ENCODE measurements at regions of chr9 and their contacts with region 1.

Region 1: DNA sequence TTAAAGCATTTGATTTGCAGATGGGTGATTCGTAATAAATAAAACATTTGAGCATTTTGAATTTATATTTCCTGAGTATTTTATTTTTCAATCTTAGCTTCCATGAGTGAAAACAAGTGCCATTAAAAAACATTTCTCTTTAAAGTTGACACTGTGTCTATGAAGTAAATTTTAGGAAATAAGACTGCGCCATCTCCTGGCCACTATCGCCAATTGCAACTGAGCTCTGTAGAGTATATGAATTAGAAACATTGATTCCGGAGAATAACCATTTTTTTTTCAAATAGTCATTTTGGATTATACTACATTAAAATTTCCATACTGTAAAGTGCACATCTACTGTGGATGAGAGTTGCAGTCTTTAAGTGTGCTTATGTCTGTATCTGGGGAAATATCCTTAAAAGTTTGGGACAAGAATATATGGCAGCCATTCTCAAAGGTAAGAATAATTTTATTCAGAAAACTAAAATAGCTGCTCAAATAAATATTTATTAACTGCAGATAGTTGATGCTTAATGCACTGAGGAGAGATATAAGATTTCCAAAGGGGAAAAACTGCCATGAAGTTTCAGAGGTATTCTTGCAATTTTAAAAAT is 5.9 kb downstream of the DMRTA1 start:
- DNase-seq: no peak
- H3K4me3 ChIP-seq: no peak overlapping the region
- H3K27ac ChIP-seq: no peak overlapping the region
- H3K4me1 ChIP-seq: peaks cover 2 to 29% (median 20%) of the 10 kb centered on the region in 4 donors
- H3K27me3 ChIP-seq: no peaks in the 10 kb centered on the region
- CTCF ChIP-seq: peak; percentile 76 to 86 (median 81)
- EP300 ChIP-seq: no peak
- POLR2A ChIP-seq: no peak

Region 2: GRCh38 chr9:21267485-21268346 is 1184.8 kb before region 1 on chr9:
- intact Hi-C with region 1: no loop called
- DNase-seq: no peak
- H3K4me3 ChIP-seq: no peak overlapping the region
- H3K27ac ChIP-seq: no peak overlapping the region
- H3K4me1 ChIP-seq: peaks cover 0 to 16% (median 0%) of the 10 kb centered on the region in 4 donors
- H3K27me3 ChIP-seq: no peaks in the 10 kb centered on the region
- CTCF ChIP-seq: no peak
- EP300 ChIP-seq: no peak
- POLR2A ChIP-seq: no peak

Region 3: DNA sequence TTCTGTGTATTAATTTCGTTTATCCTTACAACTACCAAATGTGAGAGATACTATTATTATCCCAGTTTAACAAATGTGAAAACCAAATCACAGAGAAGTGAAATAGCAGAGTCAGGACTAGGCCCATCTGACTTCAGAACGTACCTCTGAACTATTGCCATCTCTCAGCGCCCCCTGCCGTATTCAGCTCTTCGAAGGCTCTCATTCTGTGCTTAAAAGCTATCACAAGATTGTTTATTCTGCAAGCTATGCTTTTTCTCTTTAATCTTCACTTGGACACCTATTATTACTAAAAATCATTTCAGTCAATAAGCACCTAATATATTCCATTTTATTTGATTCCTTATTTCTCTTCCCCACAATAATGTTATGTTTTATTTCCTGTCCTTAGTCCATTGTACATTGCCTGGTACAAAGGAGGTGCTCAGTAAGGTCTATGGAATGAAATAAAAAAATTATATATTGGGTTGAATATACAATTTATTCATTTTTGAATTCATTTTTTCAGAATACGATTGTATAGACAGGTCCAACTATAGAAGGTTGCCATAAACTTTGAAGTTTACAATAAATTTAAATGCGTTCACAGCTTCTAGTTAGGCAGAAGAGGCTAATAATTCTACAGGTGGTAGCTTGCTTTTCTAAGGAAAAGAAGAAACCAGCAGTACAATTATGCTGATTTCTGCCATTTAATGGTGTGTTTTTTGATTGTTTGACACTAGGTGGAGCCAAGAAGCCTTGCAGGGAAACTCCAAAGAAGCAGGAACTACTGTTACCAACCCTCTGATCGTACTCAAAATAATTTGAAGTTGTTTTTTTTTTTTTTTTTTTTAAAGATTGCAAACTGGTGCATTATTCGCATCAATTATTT is 208.1 kb before region 1 on chr9:
- intact Hi-C with region 1: loop called (anchors 5 kb)
- DNase-seq: no peak
- H3K4me3 ChIP-seq: no peak overlapping the region
- H3K27ac ChIP-seq: no peak overlapping the region
- H3K4me1 ChIP-seq: no peaks in the 10 kb centered on the region
- H3K27me3 ChIP-seq: no peaks in the 10 kb centered on the region
- CTCF ChIP-seq: peak in 2 of 3 experiments; percentile 22 to 39
- EP300 ChIP-seq: no peak
- POLR2A ChIP-seq: no peak

Region 4: DNA sequence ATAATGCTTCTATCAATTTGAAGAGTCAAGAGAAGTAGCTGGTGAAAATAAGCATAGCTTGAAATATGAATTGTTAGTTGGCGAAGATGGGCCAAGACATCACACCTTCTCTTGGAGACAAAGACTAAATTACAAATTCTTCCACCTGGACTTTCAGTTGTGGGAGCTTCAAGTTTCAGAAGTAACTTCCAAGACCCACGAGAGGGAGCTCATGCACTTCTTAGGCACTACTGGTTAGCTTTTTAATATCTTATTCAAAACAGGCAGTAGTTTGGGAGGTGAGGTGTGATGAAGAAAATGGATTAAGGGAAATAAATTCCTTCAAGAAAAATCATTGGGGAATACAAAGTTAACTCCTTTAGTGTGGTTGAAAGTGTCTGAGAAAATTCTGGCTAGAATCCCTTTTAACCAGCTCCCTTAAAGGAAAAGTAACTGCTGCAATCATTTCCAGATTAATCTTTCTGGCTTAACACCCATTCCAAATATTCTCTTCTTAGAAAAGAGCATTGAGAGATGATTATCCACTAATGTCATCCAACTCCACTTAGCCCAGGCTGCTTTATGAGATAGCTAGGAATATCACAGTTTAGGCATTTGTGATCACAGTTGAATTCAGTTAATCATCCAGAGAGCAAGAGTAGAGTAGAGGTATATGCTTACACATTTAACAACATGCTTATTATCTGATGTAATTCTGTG is 145.4 kb before region 1 on chr9:
- intact Hi-C with region 1: loop called (anchors 2 kb)
- DNase-seq: no peak
- H3K4me3 ChIP-seq: no peak overlapping the region
- H3K27ac ChIP-seq: peak overlapping the region in 1 of 4 donors; percentile 4
- H3K4me1 ChIP-seq: peaks cover 0 to 9% (median 5%) of the 10 kb centered on the region in 4 donors
- H3K27me3 ChIP-seq: no peaks in the 10 kb centered on the region
- CTCF ChIP-seq: peak; percentile 61 to 80 (median 70)
- EP300 ChIP-seq: no peak
- POLR2A ChIP-seq: no peak

Measured in esophagus muscularis mucosa (tissue), 4 donors.